ENCODE measurements at regions of chr15 and their contacts with region 1.

Region 1: DNA sequence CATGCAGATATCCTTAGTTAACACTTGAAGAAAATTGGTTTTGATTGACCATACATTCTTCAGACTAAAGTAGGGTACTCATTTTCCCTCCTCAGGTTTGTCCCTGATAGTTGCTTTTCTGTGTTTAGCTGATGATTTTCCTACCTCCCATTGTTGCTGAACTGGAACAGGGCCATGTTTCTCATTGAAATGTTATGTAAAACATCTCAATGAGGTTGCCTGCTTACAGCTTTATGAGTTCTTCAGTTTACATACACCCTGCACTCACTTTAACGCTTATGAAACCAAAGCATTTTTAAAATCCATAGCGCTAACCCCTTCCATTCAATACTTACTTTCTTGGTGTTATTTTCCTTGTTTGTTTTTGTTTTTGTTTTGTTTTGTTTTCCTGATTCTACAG is 61.9 kb downstream of the HMG20A start:
- DNase-seq: no peak
- H3K4me3 ChIP-seq: no peak overlapping the region
- H3K27ac ChIP-seq: peak overlapping the region in 2 of 8 donors; percentile 37 to 83
- H3K4me1 ChIP-seq: peaks cover 0 to 53% (median 14%) of the 10 kb centered on the region in 6 donors
- H3K27me3 ChIP-seq: no peaks in the 10 kb centered on the region
- CTCF ChIP-seq: no peak
- POLR2A ChIP-seq: no peak

Region 2: DNA sequence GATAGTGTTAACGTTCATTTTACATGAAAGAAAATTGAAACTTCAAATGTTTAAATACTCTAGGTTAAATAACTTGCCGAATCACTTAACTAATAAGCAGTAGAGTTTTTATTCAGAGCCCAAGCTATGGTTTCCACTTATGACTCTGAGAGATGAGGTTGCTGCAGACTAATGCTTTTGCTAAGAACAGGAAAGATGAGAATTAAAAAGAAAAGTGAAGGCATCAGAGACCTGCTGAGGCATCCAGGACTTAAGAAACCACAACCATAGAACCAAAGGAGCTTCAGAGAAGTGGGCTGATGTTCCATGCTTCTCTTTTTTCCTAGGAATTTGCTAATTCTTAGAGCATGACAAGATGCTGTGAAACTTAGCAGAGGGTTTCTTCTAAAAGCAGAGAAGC is 52.4 kb before region 1 on chr15:
- intact Hi-C with region 1: loop called (anchors 10 kb)
- DNase-seq: no peak
- H3K4me3 ChIP-seq: no peak overlapping the region
- H3K27ac ChIP-seq: no peak overlapping the region
- H3K4me1 ChIP-seq: peaks cover 0 to 44% (median 36%) of the 10 kb centered on the region in 6 donors
- H3K27me3 ChIP-seq: no peaks in the 10 kb centered on the region
- CTCF ChIP-seq: no peak
- POLR2A ChIP-seq: no peak

Measured in spleen (tissue), 13 donors.